Activated CD4-positive, alpha-beta memory T cell treated with anti-CD3 and anti-CD28 coated beads for 36 hours (primary cell): ENCODE measurements at regions of chr3 and their contacts with region 1.

Region 1: DNA sequence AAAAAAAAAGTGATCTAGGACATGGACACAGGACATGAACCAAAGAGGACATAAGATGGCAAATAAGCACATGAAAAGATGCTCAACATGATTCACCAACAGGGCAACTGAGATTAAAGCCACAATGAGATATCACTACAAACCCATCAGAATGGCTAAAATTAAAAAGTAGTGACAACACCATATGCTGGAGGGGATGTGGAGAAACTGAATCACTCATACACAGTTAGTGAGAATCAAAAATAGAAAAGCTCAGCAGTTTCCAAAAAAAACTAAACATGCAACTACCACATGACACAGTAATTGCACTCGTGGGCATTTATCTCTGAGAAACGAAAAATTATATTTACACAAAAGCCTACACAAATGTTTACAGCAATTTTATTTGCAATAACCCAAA is 27.9 kb upstream of the ACKR4 start:
- DNase-seq: no peak
- H3K4me3 Mint-ChIP-seq: no peak overlapping the region
- H3K27ac Mint-ChIP-seq: peak overlapping the region; percentile 86
- H3K4me1 Mint-ChIP-seq: peaks cover 14% of the 10 kb centered on the region
- H3K27me3 Mint-ChIP-seq: no peaks in the 10 kb centered on the region

Region 2: GRCh38 chr3:132549890-132550578 is 19.1 kb before region 1 on chr3:
- CTCF ChIA-PET with region 1: interaction called, 3 read pairs
- POLR2A ChIA-PET with region 1: no interaction called
- intact Hi-C with region 1: loop called (anchors 1 kb)
- DNase-seq: no peak
- H3K4me3 Mint-ChIP-seq: no peak overlapping the region
- H3K27ac Mint-ChIP-seq: peak overlapping the region; percentile 73
- H3K4me1 Mint-ChIP-seq: peaks cover 20% of the 10 kb centered on the region
- H3K27me3 Mint-ChIP-seq: no peaks in the 10 kb centered on the region